Dorsolateral prefrontal cortex (tissue), 120 donors: ENCODE measurements at regions of chr4 and their contacts with region 1.

Region 1: DNA sequence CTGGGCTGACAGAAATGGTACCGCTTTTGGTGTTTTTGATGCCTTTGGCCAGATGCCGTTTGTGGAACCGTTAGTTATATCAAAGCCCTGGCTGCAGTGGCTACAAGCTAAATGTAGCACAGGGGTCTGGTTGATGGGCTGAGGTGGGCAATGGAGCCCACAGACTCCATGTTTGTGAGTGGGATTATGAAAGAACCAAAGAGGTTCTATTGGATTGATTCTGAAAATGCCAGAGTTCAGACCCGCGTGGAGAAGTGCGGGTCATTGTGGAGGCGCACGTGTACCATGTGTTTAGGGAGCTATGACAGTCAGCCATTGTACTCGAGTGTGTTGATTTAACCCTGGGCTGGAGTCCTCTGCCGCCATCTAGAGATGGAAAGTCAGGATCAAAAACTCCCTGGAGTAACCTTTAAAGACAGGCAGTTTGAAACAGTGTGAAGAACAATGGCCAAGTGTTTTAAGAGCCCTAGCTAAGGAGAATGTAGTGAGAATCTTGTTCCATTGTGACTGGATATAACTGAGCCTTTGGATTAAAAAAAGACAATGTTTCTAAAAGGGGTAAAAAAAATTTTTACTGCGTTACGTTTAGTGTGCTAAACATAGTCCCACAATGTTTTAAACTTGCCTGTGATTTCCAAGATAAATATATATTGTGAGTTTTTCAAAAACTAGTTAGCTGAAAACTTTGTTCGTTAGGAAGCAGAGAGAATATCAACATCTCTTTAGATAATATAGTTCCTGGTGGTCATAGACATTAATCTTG is 12.7 kb downstream of the ART3 start:
- DNase-seq: peak; percentile 26 to 88 (median 70)
- H3K4me3 ChIP-seq: peak overlapping the region in 58 of 59 donors; percentile 10 to 62 (median 42)
- H3K27ac ChIP-seq: peak overlapping the region in 46 of 59 donors; percentile 2 to 84 (median 60)
- H3K27me3 ChIP-seq: no peaks in the 10 kb centered on the region
- CTCF ChIP-seq: peak; percentile 42 to 91 (median 74)

Region 2: GRCh38 chr4:75995727-75996126 is 91.5 kb before region 1 on chr4:
- intact Hi-C with region 1: loop called (anchors 5 kb)
- DNase-seq: no peak
- H3K4me3 ChIP-seq: no peak overlapping the region
- H3K27ac ChIP-seq: no peak overlapping the region
- H3K27me3 ChIP-seq: no peaks in the 10 kb centered on the region
- CTCF ChIP-seq: peak; percentile 71 to 92 (median 81)

Region 3: DNA sequence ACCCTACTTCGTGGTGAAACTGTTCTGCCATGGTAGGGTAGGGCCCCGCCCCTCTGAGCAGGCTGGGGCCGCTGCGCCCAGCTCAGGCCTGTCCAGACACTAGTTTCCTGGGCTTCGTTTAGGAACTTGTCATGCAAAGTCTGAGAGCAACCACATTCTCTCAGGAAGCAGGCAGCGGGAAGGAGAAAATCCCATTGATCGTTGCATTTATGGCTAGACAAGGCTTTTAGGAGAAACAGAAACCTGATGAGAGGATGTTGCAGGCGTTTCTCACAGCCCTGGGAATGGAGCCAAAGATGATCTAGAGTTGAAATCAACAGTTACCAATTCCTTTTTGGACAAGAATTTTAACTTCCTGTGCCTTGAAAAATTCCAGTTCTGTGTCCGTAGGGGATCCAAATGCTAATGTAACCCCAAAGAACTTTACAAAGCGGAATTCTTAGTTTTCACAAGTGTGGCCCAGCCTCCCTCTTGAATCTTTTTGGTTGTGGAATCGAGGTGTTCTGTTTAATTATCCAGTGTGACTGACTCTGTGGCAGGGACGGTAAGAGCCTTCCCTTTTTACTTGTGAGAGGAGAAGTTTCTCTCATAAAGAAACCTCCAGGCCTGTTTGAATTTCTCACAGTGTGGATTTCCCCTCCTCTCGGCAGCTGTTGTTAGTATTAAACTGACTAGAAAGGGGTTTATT is 75.3 kb before region 1 on chr4:
- intact Hi-C with region 1: no loop called
- DNase-seq: no peak
- H3K4me3 ChIP-seq: peak overlapping the region in 22 of 59 donors; percentile 1 to 35 (median 18)
- H3K27ac ChIP-seq: peak overlapping the region in 38 of 59 donors; percentile 1 to 75 (median 42)
- H3K27me3 ChIP-seq: no peaks in the 10 kb centered on the region
- CTCF ChIP-seq: no peak

Region 4: GRCh38 chr4:76179398-76180318 is 92.5 kb after region 1 on chr4:
- intact Hi-C with region 1: no loop called
- DNase-seq: peak; percentile 68 to 95 (median 88)
- H3K4me3 ChIP-seq: peak overlapping the region in 6 of 59 donors; percentile 2 to 26 (median 6)
- H3K27ac ChIP-seq: peak overlapping the region in 58 of 59 donors; percentile 40 to 96 (median 83)
- H3K27me3 ChIP-seq: no peaks in the 10 kb centered on the region
- CTCF ChIP-seq: peak; percentile 73 to 99 (median 95)